ENCODE measurements at regions of chr3 and their contacts with region 1.

Region 1: GRCh38 chr3:17645072-17645698 is 97.2 kb downstream of the TBC1D5 start:
- DNase-seq: no peak
- ATAC-seq: peak; percentile 62
- H3K4me3 Mint-ChIP-seq: no peak overlapping the region
- H3K27ac Mint-ChIP-seq: no peak overlapping the region
- H3K4me1 Mint-ChIP-seq: no peaks in the 10 kb centered on the region
- H3K27me3 Mint-ChIP-seq: no peaks in the 10 kb centered on the region
- CTCF ChIP-seq: peak; percentile 51

Region 2: GRCh38 chr3:17553080-17553479 is 92.1 kb before region 1 on chr3:
- CTCF ChIA-PET with region 1: no interaction called
- POLR2A ChIA-PET with region 1: no interaction called
- DNase-seq: no peak
- ATAC-seq: no peak
- H3K4me3 Mint-ChIP-seq: no peak overlapping the region
- H3K27ac Mint-ChIP-seq: no peak overlapping the region
- H3K4me1 Mint-ChIP-seq: peaks cover 45% of the 10 kb centered on the region
- H3K27me3 Mint-ChIP-seq: no peaks in the 10 kb centered on the region; the same call in 1 of the 2 replicates
- CTCF ChIP-seq: no peak

Region 3: GRCh38 chr3:17655743-17656142 is 10.6 kb after region 1 on chr3:
- CTCF ChIA-PET with region 1: interaction called, 25 read pairs
- POLR2A ChIA-PET with region 1: no interaction called
- DNase-seq: no peak
- ATAC-seq: no peak
- H3K4me3 Mint-ChIP-seq: no peak overlapping the region
- H3K27ac Mint-ChIP-seq: no peak overlapping the region
- H3K4me1 Mint-ChIP-seq: no peaks in the 10 kb centered on the region
- H3K27me3 Mint-ChIP-seq: no peaks in the 10 kb centered on the region
- CTCF ChIP-seq: no peak

Region 4: DNA sequence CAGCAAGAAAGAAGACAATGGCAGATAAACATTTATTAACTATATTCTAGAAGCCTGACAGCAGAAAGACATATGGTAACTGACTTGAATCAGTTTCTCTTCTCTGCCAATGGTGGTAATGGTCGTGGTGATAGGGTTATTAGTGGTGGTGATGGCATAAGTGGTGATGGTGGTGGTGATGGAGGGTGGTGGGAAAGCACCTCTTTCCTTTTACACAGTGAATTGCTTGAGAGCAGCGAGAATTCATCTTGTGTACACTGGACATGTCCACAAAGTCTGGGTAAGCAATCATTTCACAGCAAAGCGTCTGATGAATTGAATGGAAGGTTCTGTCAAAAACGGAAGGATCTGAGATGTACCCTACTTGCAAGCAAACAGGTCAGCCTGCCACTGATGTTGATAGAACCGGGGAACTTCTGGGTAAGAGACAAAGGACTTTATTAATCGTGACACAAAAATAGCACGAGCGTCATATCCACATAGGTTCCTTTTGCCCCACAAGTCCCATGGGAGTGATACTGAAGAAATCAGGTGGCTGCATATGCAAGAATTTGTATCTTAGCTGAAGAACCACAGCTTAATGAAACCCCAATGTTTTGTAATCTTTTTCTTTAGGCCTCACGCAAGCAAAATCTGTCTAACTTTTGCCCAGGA is 120.8 kb after region 1 on chr3:
- CTCF ChIA-PET with region 1: no interaction called
- POLR2A ChIA-PET with region 1: no interaction called
- DNase-seq: no peak
- ATAC-seq: no peak
- H3K4me3 Mint-ChIP-seq: no peak overlapping the region
- H3K27ac Mint-ChIP-seq: no peak overlapping the region
- H3K4me1 Mint-ChIP-seq: no peaks in the 10 kb centered on the region
- H3K27me3 Mint-ChIP-seq: no peaks in the 10 kb centered on the region
- CTCF ChIP-seq: no peak